ENCODE measurements at regions of chr22 and their contacts with region 1.

Region 1: DNA sequence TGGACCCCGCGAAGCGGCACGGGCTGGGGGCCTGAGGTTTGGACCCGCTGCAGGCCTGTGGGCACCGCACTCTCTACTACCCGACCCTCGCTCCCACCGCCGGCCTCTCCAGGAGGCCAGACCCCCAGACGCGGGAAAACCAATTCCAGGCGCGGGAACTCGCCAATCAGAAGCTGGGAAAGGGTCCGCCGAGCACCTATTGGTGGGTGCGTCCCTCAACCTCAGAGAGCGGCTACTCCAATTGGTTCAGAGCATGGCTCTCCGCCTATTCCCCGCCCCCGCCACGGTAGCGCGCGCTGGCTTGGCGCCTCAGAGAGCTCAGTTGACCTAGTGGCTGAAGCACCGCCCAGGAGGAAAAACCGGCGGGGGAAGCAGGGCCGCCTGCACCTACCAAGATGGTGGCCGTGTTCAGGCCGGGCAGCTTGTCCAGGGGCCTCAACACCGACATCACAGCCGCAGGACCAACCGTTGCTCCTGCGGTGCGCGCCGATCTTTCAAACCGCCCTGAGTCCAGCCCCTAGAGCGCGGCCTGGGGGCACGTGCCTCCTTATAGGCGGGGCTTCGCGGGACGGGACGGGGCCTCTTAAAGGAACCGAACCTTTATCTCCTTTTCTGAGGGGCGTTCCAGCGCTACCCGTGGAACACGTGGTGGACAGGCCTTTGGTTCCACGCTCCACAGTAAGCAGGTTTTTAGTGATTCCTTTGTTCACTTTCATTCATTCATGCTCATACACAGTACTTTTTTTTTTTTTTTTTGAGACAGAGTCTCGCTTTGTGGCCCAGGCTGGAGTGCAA is at the start of gene CENPM:
- DNase-seq: peak; percentile 98
- ATAC-seq: peak; percentile 95
- H3K4me3 Mint-ChIP-seq: peak within 1 kb of the TSS; percentile 97
- H3K27ac Mint-ChIP-seq: peak within 1 kb of the TSS; percentile 92
- H3K4me1 Mint-ChIP-seq: peaks cover 59% of the 10 kb centered on the region
- H3K27me3 Mint-ChIP-seq: no peaks in the 10 kb centered on the region
- total RNA-seq, gene CENPM: 65.2 to 82.1 TPM

Region 2: GRCh38 chr22:41666661-41667258 is 280.1 kb before region 1 on chr22:
- CTCF ChIA-PET with region 1: no interaction called
- POLR2A ChIA-PET with region 1: interaction called, 9 read pairs
- intact Hi-C with region 1: loop called in 1 of 2 experiments (anchors 1 kb)
- DNase-seq: peak; percentile 96
- ATAC-seq: peak; percentile 94
- H3K4me3 Mint-ChIP-seq: peak overlapping the region; percentile 76
- H3K27ac Mint-ChIP-seq: peak overlapping the region; percentile 95
- H3K4me1 Mint-ChIP-seq: peaks cover 13% of the 10 kb centered on the region
- H3K27me3 Mint-ChIP-seq: no peaks in the 10 kb centered on the region

Region 3: DNA sequence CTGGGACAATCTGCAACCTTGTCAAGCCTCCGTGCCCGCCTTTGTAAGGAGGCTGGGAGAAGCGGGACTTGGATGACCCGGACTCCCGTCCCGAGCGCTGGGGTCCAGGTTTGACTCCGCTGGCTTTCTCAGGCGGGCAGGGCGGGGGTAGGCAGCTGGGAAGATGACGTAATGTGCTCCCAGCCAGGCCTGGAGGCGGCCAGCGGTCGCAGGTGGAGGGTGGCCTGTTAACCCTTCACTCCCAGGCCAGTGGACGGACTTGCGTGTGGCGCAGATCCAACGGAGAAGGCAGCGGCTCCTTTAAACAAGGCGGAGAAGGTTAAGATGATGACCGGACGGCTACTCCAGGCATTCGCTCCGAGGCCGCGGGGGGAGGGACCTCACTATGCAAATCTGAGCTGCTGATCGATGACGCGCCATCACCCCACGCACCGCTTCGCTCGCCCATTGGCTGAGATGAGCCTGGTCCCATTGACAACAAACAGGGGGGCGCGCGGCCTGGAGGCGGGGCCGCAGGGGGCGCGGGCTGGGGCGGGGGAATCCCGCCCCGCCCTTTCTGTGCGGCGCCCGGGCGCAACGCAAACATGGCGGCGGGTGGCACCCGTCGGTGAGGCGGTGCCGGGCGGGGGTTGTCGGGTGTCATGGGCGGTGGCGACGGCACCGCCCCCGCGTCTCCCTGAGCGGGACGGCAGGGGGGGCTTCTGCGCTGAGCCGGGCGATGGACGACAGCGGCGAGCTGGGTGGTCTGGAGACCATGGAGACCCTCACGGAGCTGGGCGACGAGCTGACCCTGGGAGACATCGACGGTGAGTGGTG is 114.1 kb before region 1 on chr22 and contains the start of gene SREBF2:
- CTCF ChIA-PET with region 1: interaction called, 6 read pairs
- POLR2A ChIA-PET with region 1: interaction called, 15 read pairs
- intact Hi-C with region 1: loop called in 1 of 2 experiments (anchors 1 kb)
- DNase-seq: peak; percentile 100
- ATAC-seq: peak; percentile 94
- H3K4me3 Mint-ChIP-seq: peak within 1 kb of the TSS; percentile 96
- H3K27ac Mint-ChIP-seq: peak within 1 kb of the TSS; percentile 99
- H3K4me1 Mint-ChIP-seq: peaks cover 45% of the 10 kb centered on the region
- H3K27me3 Mint-ChIP-seq: no peaks in the 10 kb centered on the region
- total RNA-seq, gene SREBF2: 101 to 105 TPM

Region 4: DNA sequence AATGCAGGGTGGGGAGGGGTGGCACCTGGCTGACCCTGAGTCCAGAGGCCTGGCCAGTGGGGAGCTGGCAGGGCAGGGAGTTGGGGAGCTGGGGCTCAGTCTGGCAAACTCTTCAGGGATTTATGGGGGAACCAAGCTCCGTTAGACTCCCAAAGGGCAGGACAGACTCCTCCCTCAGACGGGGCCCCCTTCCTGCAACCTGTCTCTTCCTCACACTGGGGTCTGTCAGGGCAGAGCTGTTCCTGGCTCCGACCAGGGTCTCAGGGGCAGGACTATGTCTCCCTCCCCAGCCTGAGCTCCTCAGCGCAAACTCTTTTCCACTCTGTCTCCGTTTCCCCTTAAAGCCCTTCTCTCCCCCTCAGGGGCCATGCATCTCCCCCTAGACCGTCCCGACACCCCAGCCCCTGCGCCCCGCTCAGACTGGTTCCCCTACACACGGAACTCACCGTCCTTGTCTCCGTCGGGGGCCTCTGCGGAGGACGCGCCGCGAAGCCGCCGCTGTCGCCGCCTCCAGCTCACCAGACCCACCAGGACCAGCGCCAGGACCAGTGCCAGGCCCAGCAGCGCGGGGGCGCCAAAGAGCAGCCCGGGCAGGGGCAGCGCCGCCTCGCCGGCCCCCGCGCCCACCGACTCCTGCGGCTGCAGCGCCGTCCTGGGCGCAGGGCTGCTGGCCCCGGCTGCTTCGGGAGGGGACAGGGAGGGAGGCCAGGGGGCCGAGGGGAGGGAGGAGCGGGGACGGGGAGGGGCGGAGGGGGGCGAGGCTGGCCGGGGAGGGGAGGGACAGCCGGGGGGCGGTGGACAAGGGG is 21.0 kb before region 1 on chr22:
- CTCF ChIA-PET with region 1: interaction called, 10 read pairs
- POLR2A ChIA-PET with region 1: interaction called, 4 read pairs
- intact Hi-C with region 1: no loop called
- DNase-seq: peak; percentile 88
- ATAC-seq: peak; percentile 87
- H3K4me3 Mint-ChIP-seq: peak overlapping the region; percentile 66
- H3K27ac Mint-ChIP-seq: peak overlapping the region; percentile 58
- H3K4me1 Mint-ChIP-seq: peaks cover 14% of the 10 kb centered on the region
- H3K27me3 Mint-ChIP-seq: peaks cover 5% of the 10 kb centered on the region

Region 5: DNA sequence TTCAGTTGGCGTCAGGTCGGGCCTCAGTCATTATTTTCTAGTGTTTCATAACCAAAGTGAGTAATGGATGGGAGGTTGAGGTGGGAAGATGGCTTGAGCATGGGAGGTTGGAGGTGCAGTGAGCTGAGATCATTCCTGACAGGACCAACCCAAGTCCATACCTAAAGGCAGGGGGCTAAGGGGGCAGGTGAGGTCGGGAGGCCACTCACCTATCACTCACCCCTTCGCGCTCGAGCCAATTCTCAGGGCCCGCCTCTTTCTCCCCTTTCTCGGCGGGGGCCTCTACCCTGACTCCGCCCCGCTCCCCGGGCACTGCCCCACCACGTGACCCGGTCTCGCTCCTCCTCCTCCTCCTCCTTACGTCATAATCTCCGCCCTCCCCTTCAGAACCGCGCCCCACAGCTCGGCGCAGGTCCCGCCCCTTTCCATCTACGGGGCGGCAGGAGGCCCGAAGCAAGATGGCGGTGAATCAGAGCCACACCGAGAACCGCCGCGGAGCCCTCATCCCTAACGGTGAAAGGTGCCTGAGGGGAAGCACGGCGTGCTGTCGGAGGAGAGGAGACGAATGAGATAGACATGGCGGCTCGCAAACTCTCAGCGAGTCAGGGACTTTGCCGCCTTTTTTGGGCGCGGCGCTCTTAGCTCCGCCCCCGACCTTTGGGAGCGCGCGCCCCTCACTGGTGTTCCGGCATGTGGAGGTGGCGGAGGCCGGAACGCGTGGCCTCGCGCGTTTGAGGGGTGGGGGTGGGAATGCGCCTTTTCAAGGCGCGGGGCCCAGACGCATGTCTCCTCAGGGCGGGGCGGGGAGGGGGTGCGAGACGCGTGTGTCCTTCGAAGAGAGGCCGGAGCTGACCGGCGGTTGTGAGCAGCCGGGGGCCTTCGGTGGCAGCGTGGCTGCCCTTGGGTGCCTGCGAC is 51.8 kb after region 1 on chr22 and contains the start of gene WBP2NL:
- CTCF ChIA-PET with region 1: no interaction called
- POLR2A ChIA-PET with region 1: no interaction called
- intact Hi-C with region 1: loop called in 1 of 2 experiments (anchors 1 kb)
- DNase-seq: peak; percentile 92
- ATAC-seq: peak; percentile 97
- H3K4me3 Mint-ChIP-seq: peak within 1 kb of the TSS; percentile 77
- H3K27ac Mint-ChIP-seq: peak within 1 kb of the TSS; percentile 97
- H3K4me1 Mint-ChIP-seq: peaks cover 20% of the 10 kb centered on the region
- H3K27me3 Mint-ChIP-seq: no peaks in the 10 kb centered on the region
- total RNA-seq, gene WBP2NL: 0.30 to 0.54 TPM

Region 6: GRCh38 chr22:42079319-42080251 is 132.8 kb after region 1 on chr22 and contains the start of gene SMDT1:
- CTCF ChIA-PET with region 1: no interaction called
- POLR2A ChIA-PET with region 1: interaction called, 10 read pairs
- intact Hi-C with region 1: loop called in 1 of 2 experiments (anchors 2 kb)
- DNase-seq: peak; percentile 99
- ATAC-seq: peak; percentile 95
- H3K4me3 Mint-ChIP-seq: peak within 1 kb of the TSS; percentile 90
- H3K27ac Mint-ChIP-seq: peak within 1 kb of the TSS; percentile 96
- H3K4me1 Mint-ChIP-seq: peaks cover 29% of the 10 kb centered on the region
- H3K27me3 Mint-ChIP-seq: no peaks in the 10 kb centered on the region
- total RNA-seq, gene SMDT1: 17.2 to 45.4 TPM